ENCODE measurements at regions of chr19 and their contacts with region 1.

Region 1: DNA sequence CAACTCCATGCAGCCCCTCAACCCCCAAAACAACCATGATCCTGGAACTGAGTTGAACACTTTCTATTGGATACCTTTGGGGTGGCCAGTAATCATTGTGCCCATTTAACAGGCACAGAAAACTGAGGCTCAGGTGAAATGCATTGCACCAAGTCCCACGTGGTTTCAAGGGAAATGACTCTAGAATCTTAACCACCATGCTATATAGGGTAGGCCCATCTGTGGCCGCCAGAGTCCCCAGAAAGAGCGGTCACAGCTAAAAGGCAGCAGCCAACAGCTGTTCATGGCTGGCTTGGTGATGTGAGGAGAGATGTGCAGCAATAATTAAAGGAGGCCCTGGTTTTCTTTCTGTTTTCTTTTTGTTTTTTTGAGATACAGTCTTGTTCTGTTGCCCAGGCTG is 2.6 kb downstream of the CNN1 start:
- DNase-seq: no peak
- H3K4me3 ChIP-seq: peak overlapping the region; percentile 72 to 79 (median 74)
- H3K27ac ChIP-seq: peak overlapping the region; percentile 94 to 99 (median 98)
- H3K4me1 ChIP-seq: peaks cover 0 to 70% (median 56%) of the 10 kb centered on the region in 4 donors
- H3K27me3 ChIP-seq: no peaks in the 10 kb centered on the region
- CTCF ChIP-seq: no peak
- EP300 ChIP-seq: no peak
- POLR2A ChIP-seq: no peak

Region 2: GRCh38 chr19:11551603-11552235 is 10.5 kb after region 1 on chr19:
- intact Hi-C with region 1: loop called (anchors 1 kb)
- DNase-seq: peak; percentile 90
- H3K4me3 ChIP-seq: peak overlapping the region in 3 of 4 donors; percentile 13 to 28 (median 22)
- H3K27ac ChIP-seq: peak overlapping the region; percentile 87 to 99 (median 98)
- H3K4me1 ChIP-seq: peaks cover 0 to 59% (median 42%) of the 10 kb centered on the region in 4 donors
- H3K27me3 ChIP-seq: no peaks in the 10 kb centered on the region
- CTCF ChIP-seq: peak; percentile 17 to 59 (median 45)
- EP300 ChIP-seq: peak in 1 of 4 donors; percentile 2
- POLR2A ChIP-seq: no peak

Measured in sigmoid colon (tissue), 7 donors.